Right cardiac atrium (tissue), 5 donors: ENCODE measurements at regions of chr6 and their contacts with region 1.

Region 1: DNA sequence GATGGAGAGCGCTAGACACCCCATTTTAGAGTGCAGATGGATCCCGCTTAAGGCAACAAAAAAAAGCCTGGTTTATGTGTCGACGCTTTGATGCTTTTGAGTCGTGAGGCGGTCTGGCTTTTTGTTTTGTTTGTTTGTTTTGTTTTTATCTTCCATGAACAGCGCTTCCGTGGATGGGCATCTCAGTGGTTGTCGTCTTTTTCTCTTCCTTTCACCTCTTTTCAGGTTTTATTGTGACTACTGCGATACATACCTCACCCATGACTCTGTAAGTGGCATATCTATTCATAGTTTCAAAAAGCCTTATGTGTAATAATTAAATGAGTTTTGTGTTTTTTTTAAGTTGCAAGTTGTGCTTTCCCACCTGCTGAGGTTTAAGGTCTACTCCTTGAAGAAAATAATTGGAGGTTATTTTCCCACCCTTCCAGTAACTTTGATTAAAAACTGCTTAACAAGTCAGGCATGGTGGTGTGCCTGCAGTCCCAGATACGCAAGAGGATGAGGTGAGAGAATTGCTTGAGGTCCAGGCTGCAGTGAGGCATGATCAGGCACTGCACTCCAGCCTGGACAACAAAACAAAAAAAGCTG is 476 bp downstream of the SNRPC start:
- DNase-seq: no peak
- ATAC-seq: no peak
- H3K4me3 ChIP-seq: peak overlapping the region; percentile 67
- H3K27ac ChIP-seq: peak overlapping the region; percentile 96
- H3K4me1 ChIP-seq: peaks cover 1% of the 10 kb centered on the region
- H3K27me3 ChIP-seq: no peaks in the 10 kb centered on the region

Region 2: DNA sequence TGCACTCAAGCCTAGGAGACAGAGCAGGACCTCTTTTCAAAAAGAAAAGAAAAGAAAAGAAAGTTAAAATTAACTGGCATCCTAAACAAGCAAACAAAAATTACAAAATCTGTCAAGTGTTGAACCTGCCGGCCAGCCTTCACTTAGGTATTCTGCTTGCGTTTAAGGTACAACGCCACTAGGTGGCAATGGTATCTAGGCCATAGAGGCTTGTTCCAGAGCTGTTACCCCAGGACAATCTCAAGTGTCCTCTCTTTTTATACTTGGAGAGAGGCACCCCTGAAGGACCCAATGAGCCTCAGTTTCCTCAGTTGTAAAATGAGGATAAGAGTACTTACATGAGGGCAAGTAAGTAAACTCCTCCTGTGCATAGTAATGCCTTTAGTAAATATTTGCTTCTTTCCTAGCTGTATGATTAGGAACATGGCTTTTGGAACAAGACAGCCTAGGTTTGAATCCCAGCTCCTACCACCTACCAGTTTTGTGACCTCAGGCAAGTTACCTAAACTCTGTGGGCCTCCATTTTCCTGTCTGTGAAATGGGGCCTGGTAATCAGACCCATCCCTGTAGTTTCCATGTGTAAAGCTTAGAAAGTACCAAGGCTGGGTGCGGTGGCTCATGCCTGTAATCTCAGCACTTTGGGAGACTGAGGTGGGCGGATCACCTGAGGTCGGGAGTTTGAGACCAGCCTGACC is 297.7 kb before region 1 on chr6:
- intact Hi-C with region 1: no loop called
- DNase-seq: no peak
- ATAC-seq: peak; percentile 40 to 50
- H3K4me3 ChIP-seq: no peak overlapping the region
- H3K27ac ChIP-seq: no peak overlapping the region
- H3K4me1 ChIP-seq: no peaks in the 10 kb centered on the region
- H3K27me3 ChIP-seq: no peaks in the 10 kb centered on the region

Region 3: GRCh38 chr6:34696739-34697543 is 60.8 kb before region 1 on chr6 and contains the start of gene ILRUN:
- intact Hi-C with region 1: loop called in 1 of 4 experiments (anchors 10 kb)
- DNase-seq: peak; percentile 97 to 99 (median 99)
- ATAC-seq: peak; percentile 95
- H3K4me3 ChIP-seq: peak within 1 kb of the TSS; percentile 87
- H3K27ac ChIP-seq: peak within 1 kb of the TSS; percentile 77
- H3K4me1 ChIP-seq: peaks cover 2% of the 10 kb centered on the region
- H3K27me3 ChIP-seq: no peaks in the 10 kb centered on the region
- total RNA-seq, gene ILRUN: 120 to 150 (median 134) TPM